Activated T-helper 2 cell treated with anti-CD3 and anti-CD28 coated beads, Interferon-gamma antibody, Interleukin-2, Interleukin-4, amounts not matched to agents 10 μg/mL and 5 μg/mL and 100 μg/mL, durations not matched to agents 14 hours and 24 hours and 36 hours (primary cell): ENCODE measurements at regions of chr3 and their contacts with region 1.

Region 1: GRCh38 chr3:180601688-180602666 is at the start of gene TTC14:
- DNase-seq: peak; percentile 95
- H3K4me3 Mint-ChIP-seq: peak within 1 kb of the TSS; percentile 88
- H3K27ac Mint-ChIP-seq: peak within 1 kb of the TSS; percentile 88
- H3K4me1 Mint-ChIP-seq: peaks cover 15% of the 10 kb centered on the region
- H3K27me3 Mint-ChIP-seq: peaks cover 11% of the 10 kb centered on the region
- total RNA-seq, gene TTC14: 48.6 and 50.0 TPM in 2 replicates

Region 2: GRCh38 chr3:179347345-179348194 is 1254.4 kb before region 1 on chr3 and contains the start of gene MFN1:
- intact Hi-C with region 1: loop called (anchors 1 kb)
- DNase-seq: peak; percentile 88
- H3K4me3 Mint-ChIP-seq: peak within 1 kb of the TSS; percentile 91
- H3K27ac Mint-ChIP-seq: peak within 1 kb of the TSS; percentile 89
- H3K4me1 Mint-ChIP-seq: peaks cover 15% of the 10 kb centered on the region
- H3K27me3 Mint-ChIP-seq: no peaks in the 10 kb centered on the region
- total RNA-seq, gene MFN1: 32.2 and 38.2 TPM in 2 replicates

Region 3: DNA sequence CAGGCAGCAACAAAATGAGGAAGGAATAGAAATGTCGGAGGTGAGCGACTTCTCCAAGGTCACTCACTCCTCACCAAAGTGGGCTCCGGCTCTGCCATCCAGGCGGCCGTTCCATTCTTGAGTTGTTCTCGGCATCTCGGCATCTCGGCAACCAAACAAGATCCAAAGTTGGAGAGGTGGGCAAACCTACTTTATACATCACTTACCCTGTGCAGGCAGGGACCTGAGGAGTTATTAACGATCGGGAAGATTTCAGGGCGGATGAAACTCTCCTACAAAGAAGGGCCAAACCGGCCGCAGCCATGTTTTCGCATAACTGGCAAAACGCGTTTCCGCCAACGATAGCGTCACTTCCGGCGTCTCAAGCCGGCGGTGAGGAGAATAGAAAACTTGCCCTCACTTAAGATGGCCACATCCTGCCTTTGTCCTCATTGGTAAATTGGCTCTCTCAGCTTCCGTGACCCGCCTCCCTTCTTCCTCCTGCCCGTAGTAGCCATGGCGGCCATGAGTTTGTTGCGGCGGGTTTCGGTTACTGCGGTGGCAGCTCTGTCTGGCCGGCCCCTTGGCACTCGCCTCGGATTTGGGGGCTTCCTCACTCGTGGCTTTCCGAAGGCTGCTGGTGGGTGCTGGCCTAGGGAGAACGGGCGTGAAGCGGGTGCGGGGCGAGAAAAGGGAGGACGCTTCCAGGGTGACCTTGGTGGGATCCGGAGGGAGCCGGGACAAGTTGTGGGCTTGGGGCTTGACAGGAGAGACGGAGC is 997.5 kb before region 1 on chr3 and contains the starts of genes MRPL47 and NDUFB5:
- intact Hi-C with region 1: loop called (anchors 5 kb)
- DNase-seq: peak; percentile 91
- H3K4me3 Mint-ChIP-seq: peak within 1 kb of the TSS; percentile 99
- H3K27ac Mint-ChIP-seq: peak within 1 kb of the TSS; percentile 99
- H3K4me1 Mint-ChIP-seq: peaks cover 31% of the 10 kb centered on the region
- H3K27me3 Mint-ChIP-seq: no peaks in the 10 kb centered on the region
- total RNA-seq, gene MRPL47: 61.2 and 64.4 TPM in 2 replicates
- total RNA-seq, gene NDUFB5: 90.3 and 91.6 TPM in 2 replicates

Region 4: GRCh38 chr3:180633722-180634121 is 31.7 kb after region 1 on chr3:
- intact Hi-C with region 1: loop called (anchors 2 kb)
- DNase-seq: no peak
- H3K4me3 Mint-ChIP-seq: no peak overlapping the region
- H3K27ac Mint-ChIP-seq: no peak overlapping the region
- H3K4me1 Mint-ChIP-seq: peaks cover 4% of the 10 kb centered on the region
- H3K27me3 Mint-ChIP-seq: peaks cover 8% of the 10 kb centered on the region

Region 5: GRCh38 chr3:180912304-180913296 is 310.6 kb after region 1 on chr3 and contains the start of gene FXR1:
- intact Hi-C with region 1: loop called (anchors 2 kb)
- DNase-seq: peak; percentile 79
- H3K4me3 Mint-ChIP-seq: peak within 1 kb of the TSS; percentile 99
- H3K27ac Mint-ChIP-seq: peak within 1 kb of the TSS; percentile 95
- H3K4me1 Mint-ChIP-seq: peaks cover 31% of the 10 kb centered on the region
- H3K27me3 Mint-ChIP-seq: no peaks in the 10 kb centered on the region
- total RNA-seq, gene FXR1: 163 and 170 TPM in 2 replicates